Pancreas (tissue), 10 donors: ENCODE measurements at regions of chr17 and their contacts with region 1.

Region 1: DNA sequence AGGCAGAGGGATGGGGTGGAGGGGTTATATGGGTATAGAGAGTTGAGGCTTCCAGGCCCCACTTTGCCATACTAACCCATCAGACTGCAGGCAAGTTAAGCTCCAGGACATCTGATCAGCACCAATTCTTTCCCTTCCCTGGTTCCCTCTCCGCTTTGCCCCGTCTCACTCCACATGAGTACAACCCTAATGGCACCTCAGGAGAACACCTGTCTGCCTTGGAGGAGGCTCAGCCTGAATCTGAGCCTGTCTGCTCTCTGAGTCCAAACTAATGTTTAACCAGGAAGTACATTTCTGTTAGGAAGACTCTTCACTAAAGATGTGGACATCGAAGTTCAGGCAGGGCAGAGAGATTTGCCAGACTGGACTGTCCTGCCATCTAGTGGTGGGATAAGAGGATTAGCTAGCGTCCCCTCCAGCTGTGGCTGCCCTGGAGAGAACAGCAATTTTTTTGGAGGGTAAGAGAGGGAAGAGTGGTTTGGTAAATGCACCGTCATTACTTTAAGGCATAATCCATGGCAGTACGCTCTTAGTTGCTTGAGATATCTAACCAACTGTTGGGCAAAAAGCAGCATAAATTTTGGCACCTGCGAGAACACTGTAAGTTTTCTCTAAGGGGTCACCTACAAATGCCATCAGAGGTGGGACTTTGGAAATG is 29.2 kb upstream of the LRRC75A start:
- DNase-seq: peak in 5 of 6 donors; percentile 73 to 86 (median 76)
- ATAC-seq: peak; percentile 96 to 99 (median 98)
- H3K4me3 ChIP-seq: no peak overlapping the region
- H3K27ac ChIP-seq: no peak overlapping the region
- H3K4me1 ChIP-seq: no peaks in the 10 kb centered on the region
- H3K27me3 ChIP-seq: no peaks in the 10 kb centered on the region
- CTCF ChIP-seq: peak; percentile 77 to 89 (median 87)

Region 2: GRCh38 chr17:16363749-16364536 is 157.3 kb before region 1 on chr17:
- intact Hi-C with region 1: loop called in 2 of 3 experiments (anchors 10 kb)
- DNase-seq: peak in 5 of 6 donors; percentile 40 to 84 (median 66)
- ATAC-seq: peak; percentile 82 to 97 (median 94)
- H3K4me3 ChIP-seq: no peak overlapping the region
- H3K27ac ChIP-seq: no peak overlapping the region
- H3K4me1 ChIP-seq: no peaks in the 10 kb centered on the region
- H3K27me3 ChIP-seq: no peaks in the 10 kb centered on the region
- CTCF ChIP-seq: peak; percentile 87 to 94 (median 90)

Region 3: GRCh38 chr17:16456742-16457316 is 64.4 kb before region 1 on chr17:
- intact Hi-C with region 1: loop called (anchors 2 to 10 kb)
- DNase-seq: no peak
- ATAC-seq: no peak
- H3K4me3 ChIP-seq: no peak overlapping the region
- H3K27ac ChIP-seq: no peak overlapping the region
- H3K4me1 ChIP-seq: no peaks in the 10 kb centered on the region
- H3K27me3 ChIP-seq: no peaks in the 10 kb centered on the region
- CTCF ChIP-seq: no peak

Region 4: GRCh38 chr17:16911141-16911937 is 390.1 kb after region 1 on chr17:
- intact Hi-C with region 1: no loop called
- DNase-seq: no peak
- ATAC-seq: no peak
- H3K4me3 ChIP-seq: no peak overlapping the region
- H3K27ac ChIP-seq: no peak overlapping the region
- H3K4me1 ChIP-seq: no peaks in the 10 kb centered on the region
- H3K27me3 ChIP-seq: no peaks in the 10 kb centered on the region
- CTCF ChIP-seq: no peak